Activated B cell treated with CpG ODN at 0.5 μM for 24 hours (primary cell): ENCODE measurements at regions of chr2 and their contacts with region 1.

Region 1: DNA sequence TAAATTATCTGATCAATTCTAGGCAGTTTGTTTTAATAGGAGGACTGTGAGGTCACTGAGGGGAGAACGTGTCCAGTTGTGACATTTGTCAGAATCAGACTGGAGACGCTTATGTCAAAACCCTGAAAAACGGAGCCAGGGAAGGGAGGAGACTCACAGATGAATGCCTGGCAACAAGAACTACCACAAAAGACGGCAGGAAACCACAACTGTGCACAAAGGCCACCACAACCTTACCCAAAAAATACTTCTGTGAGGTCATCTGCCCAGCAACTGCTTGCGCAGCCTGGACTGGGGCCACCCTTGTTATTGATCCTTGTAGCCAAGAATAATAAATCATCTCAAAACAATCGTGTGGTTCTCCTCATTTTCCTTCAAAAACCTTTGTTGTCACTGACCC is 173.0 kb upstream of the ALKAL2 start:
- DNase-seq: no peak
- ATAC-seq: peak; percentile 80
- H3K4me3 Mint-ChIP-seq: peak overlapping the region; percentile 66
- H3K27ac Mint-ChIP-seq: peak overlapping the region; percentile 90
- H3K4me1 Mint-ChIP-seq: peaks cover 77% of the 10 kb centered on the region
- H3K27me3 Mint-ChIP-seq: no peaks in the 10 kb centered on the region
- CTCF ChIP-seq: no peak

Region 2: DNA sequence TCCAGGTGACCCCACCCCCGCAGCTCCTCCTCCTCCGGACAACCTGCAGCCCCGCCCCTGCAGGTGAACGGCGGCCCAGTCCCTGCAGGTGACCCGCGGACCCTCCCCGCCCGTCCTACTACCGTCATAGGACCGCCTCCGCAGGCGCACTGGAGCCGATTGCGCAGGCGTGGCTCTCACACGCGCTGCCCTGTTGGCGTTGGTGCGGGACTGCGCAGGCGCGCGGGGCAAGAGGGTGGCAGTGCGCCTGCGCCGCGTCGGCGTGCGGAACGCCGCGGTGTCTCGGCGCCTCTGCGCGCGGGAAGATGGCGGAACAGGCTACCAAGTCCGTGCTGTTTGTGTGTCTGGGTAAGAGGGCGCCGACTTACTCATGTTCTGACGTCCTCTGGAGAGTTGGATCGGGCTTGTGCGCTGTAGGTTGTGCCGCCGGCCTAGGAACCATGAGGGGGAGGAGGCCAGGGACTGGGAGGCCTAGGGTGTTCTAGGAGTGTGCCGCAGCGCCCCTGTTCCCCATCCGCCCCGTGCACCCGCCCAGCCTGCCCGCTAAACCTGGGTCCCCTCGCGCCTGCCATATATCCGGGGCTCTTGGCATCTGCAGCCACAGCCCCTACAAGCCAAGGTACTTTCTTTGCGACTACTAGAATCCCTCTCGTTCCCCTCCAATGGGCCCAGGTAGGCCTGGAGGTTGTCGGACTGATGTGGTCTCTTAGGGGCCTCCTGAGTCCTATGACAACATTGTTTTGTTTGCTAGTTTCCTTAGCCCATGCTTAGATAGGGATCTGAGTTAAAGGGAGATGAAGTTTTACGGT is 196.0 kb before region 1 on chr2 and contains the start of gene ACP1:
- CTCF ChIA-PET with region 1: no interaction called
- POLR2A ChIA-PET with region 1: no interaction called
- intact Hi-C with region 1: loop called (anchors 2 kb)
- DNase-seq: peak; percentile 95
- ATAC-seq: peak; percentile 85
- H3K4me3 Mint-ChIP-seq: peak within 1 kb of the TSS; percentile 93
- H3K27ac Mint-ChIP-seq: peak within 1 kb of the TSS; percentile 93
- H3K4me1 Mint-ChIP-seq: peaks cover 50% of the 10 kb centered on the region
- H3K27me3 Mint-ChIP-seq: no peaks in the 10 kb centered on the region
- CTCF ChIP-seq: no peak
- total RNA-seq, gene ACP1: 80.1 and 81.8 TPM in 2 replicates

Region 3: DNA sequence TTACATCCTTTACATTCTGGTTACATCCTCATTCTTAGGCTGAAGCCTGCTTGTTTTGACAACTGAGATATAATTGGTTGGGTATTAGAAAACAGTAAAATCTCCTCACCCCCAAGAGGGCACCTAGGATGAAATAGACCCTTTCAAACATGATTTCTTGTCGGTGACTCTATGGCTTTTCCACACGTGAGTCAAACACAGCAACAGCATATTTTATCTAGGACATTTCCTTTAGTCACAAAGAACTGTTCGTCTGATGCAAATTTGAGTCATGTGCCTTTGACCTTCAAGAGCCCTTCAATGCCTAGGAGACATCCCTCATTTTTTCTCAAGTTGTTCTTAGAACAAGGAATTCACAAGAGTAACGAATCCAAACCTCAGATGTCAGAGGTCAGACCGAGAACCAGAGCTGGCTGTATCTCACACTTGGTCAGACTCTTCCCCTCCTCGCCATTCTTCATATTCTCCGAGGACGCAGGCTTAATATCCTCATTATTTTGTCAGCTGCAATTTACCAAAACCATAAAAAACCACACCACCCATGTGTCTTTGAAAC is 112.4 kb before region 1 on chr2:
- CTCF ChIA-PET with region 1: no interaction called
- POLR2A ChIA-PET with region 1: no interaction called
- intact Hi-C with region 1: loop called (anchors 5 kb)
- DNase-seq: no peak
- ATAC-seq: no peak
- H3K4me3 Mint-ChIP-seq: no peak overlapping the region
- H3K27ac Mint-ChIP-seq: no peak overlapping the region
- H3K4me1 Mint-ChIP-seq: peaks cover 23% of the 10 kb centered on the region
- H3K27me3 Mint-ChIP-seq: peaks cover 3% of the 10 kb centered on the region
- CTCF ChIP-seq: no peak

Region 4: GRCh38 chr2:429575-430254 is 31.1 kb before region 1 on chr2:
- CTCF ChIA-PET with region 1: no interaction called
- POLR2A ChIA-PET with region 1: no interaction called
- intact Hi-C with region 1: loop called (anchors 5 kb)
- DNase-seq: no peak
- ATAC-seq: peak; percentile 81
- H3K4me3 Mint-ChIP-seq: peak overlapping the region; percentile 79
- H3K27ac Mint-ChIP-seq: peak overlapping the region; percentile 80
- H3K4me1 Mint-ChIP-seq: peaks cover 29% of the 10 kb centered on the region
- H3K27me3 Mint-ChIP-seq: no peaks in the 10 kb centered on the region
- CTCF ChIP-seq: no peak

Region 5: DNA sequence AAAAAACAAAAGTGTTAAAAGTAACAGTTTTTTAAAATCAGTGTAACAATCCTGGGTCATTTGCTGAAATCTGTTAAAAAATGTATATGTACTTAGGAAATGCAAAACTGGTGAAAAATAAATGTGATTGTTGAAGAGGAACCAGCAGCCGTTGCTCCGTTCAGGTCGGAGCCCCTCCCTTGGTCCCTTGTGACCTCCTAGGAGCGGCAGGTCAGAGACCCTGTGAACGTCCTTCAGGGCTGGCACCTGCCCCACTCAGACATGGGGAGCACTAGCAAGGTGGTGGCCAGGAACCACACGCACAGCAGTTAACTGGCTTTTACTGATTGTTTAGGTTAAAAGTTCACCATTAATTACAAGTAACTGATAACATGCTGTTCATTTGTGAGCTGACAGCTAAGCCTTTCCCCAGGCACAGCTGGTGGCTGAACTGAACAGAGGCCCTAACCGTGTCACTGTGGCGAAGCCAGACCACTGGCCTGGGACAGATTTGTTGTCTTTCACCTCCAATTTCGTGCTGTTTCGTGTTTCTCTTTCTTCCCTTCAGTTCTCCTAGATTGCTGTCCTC is 13.8 kb before region 1 on chr2:
- CTCF ChIA-PET with region 1: no interaction called
- POLR2A ChIA-PET with region 1: interaction called, 4 read pairs
- intact Hi-C with region 1: loop called (anchors 2 kb)
- DNase-seq: no peak
- ATAC-seq: peak; percentile 63
- H3K4me3 Mint-ChIP-seq: peak overlapping the region; percentile 32
- H3K27ac Mint-ChIP-seq: peak overlapping the region; percentile 72
- H3K4me1 Mint-ChIP-seq: peaks cover 53% of the 10 kb centered on the region
- H3K27me3 Mint-ChIP-seq: no peaks in the 10 kb centered on the region
- CTCF ChIP-seq: no peak

Region 6: GRCh38 chr2:501130-501529 is 40.3 kb after region 1 on chr2:
- CTCF ChIA-PET with region 1: no interaction called
- POLR2A ChIA-PET with region 1: no interaction called
- intact Hi-C with region 1: no loop called
- DNase-seq: no peak
- ATAC-seq: no peak
- H3K4me3 Mint-ChIP-seq: no peak overlapping the region
- H3K27ac Mint-ChIP-seq: no peak overlapping the region
- H3K4me1 Mint-ChIP-seq: no peaks in the 10 kb centered on the region
- H3K27me3 Mint-ChIP-seq: peaks cover 6% of the 10 kb centered on the region
- CTCF ChIP-seq: no peak

Region 7: DNA sequence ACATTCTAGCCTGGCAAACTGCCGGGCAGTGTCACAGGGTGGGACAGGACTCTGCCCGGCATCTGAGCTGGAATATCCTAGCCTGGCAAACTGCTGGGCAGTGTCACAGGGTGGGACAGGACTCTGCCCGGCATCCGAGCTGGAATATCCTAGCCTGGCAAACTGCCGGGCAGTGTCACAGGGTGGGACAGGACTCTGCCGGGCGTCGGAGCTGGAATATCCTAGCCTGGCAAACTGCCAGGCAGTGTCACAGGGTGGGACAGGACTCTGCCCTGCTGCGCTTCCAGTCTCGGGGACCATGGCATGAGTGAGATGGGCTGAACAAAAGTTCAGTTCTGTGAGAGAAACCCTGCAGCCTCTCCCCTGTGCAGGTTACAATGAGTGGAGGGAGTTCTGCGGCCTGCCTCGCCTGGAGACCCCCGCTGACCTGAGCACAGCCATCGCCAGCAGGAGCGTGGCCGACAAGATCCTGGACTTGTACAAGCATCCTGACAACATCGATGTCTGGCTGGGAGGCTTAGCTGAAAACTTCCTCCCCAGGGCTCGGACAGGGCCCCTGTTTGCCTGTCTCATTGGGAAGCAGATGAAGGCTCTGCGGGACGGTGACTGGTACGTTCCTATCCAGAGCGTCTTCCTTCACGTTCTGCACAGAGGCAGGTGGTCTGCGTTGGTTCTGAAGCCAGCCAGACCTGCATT is 1032.7 kb after region 1 on chr2:
- CTCF ChIA-PET with region 1: no interaction called
- POLR2A ChIA-PET with region 1: no interaction called
- intact Hi-C with region 1: no loop called
- DNase-seq: no peak
- ATAC-seq: no peak
- H3K4me3 Mint-ChIP-seq: no peak overlapping the region
- H3K27ac Mint-ChIP-seq: no peak overlapping the region
- H3K4me1 Mint-ChIP-seq: no peaks in the 10 kb centered on the region
- H3K27me3 Mint-ChIP-seq: no peaks in the 10 kb centered on the region
- CTCF ChIP-seq: no peak